CD8-positive, alpha-beta T cell (primary cell): ENCODE measurements at regions of chr3 and their contacts with region 1.

Region 1: GRCh38 chr3:171491361-171491760 is 31.2 kb upstream of the TNIK start:
- DNase-seq: peak in 2 of 9 experiments; percentile 31 to 61
- ATAC-seq: peak; percentile 40
- H3K4me3 ChIP-seq: peak overlapping the region; percentile 25 to 32
- H3K4me3 Mint-ChIP-seq: peak overlapping the region; percentile 50
- H3K27ac ChIP-seq: peak overlapping the region in 1 of 2 experiments; percentile 57
- H3K27ac Mint-ChIP-seq: peak overlapping the region; percentile 66
- H3K4me1 ChIP-seq: peaks cover 39% of the 10 kb centered on the region
- H3K4me1 Mint-ChIP-seq: peaks cover 47% of the 10 kb centered on the region
- H3K27me3 ChIP-seq: no peaks in the 10 kb centered on the region
- H3K27me3 Mint-ChIP-seq: no peaks in the 10 kb centered on the region
- CTCF ChIP-seq: no peak

Region 2: DNA sequence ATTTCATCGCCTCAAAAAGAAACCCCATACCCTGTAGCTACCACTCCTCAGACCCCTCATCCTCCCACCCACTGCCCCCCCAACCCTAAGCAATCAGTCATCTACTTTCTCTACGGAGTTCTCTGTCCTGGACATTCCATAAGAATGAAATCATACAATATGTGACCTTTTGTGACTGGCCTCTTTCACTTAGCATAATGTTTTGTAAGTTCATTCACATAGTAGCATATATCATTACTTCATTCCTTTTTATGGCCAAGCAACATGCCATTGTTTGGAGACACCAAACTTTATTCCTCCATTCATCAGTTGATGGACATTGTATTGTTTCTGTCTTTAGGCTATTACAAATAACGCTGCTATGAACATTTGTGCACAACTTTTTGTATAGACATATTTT is 95.3 kb before region 1 on chr3:
- CTCF ChIA-PET with region 1: no interaction called
- POLR2A ChIA-PET with region 1: no interaction called
- intact Hi-C with region 1: no loop called
- DNase-seq: no peak
- ATAC-seq: no peak
- H3K4me3 ChIP-seq: no peak overlapping the region
- H3K4me3 Mint-ChIP-seq: no peak overlapping the region
- H3K27ac ChIP-seq: no peak overlapping the region
- H3K27ac Mint-ChIP-seq: no peak overlapping the region
- H3K4me1 ChIP-seq: no peaks in the 10 kb centered on the region
- H3K4me1 Mint-ChIP-seq: peaks cover 53% of the 10 kb centered on the region
- H3K27me3 ChIP-seq: no peaks in the 10 kb centered on the region
- H3K27me3 Mint-ChIP-seq: no peaks in the 10 kb centered on the region
- CTCF ChIP-seq: no peak

Region 3: GRCh38 chr3:171436380-171436779 is 55.0 kb before region 1 on chr3:
- CTCF ChIA-PET with region 1: no interaction called
- POLR2A ChIA-PET with region 1: no interaction called
- intact Hi-C with region 1: no loop called
- DNase-seq: no peak
- ATAC-seq: no peak
- H3K4me3 ChIP-seq: no peak overlapping the region
- H3K4me3 Mint-ChIP-seq: no peak overlapping the region
- H3K27ac ChIP-seq: no peak overlapping the region
- H3K27ac Mint-ChIP-seq: no peak overlapping the region
- H3K4me1 ChIP-seq: peaks cover 9% of the 10 kb centered on the region
- H3K4me1 Mint-ChIP-seq: peaks cover 71% of the 10 kb centered on the region
- H3K27me3 ChIP-seq: no peaks in the 10 kb centered on the region
- H3K27me3 Mint-ChIP-seq: no peaks in the 10 kb centered on the region
- CTCF ChIP-seq: no peak

Region 4: DNA sequence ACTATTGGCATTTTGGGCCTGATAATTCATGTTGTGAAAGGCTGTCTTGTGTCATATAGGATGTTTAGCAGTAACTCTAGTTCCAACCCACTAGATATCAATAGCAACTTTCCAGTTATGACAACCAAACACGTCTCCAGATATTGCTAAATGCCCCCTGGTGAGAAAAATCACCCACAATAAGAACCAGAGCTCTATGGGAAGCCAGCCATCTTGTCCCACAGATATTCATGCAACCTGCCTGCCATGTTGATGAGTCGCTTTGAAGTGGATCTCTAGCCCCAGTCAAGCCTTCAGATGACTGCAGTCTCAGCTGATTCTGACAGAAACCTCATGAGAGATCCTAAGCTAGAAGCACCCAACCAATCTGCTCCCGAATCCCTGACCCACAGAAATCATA is 25.6 kb before region 1 on chr3:
- CTCF ChIA-PET with region 1: interaction called, 4 read pairs
- POLR2A ChIA-PET with region 1: interaction called, 7 read pairs
- intact Hi-C with region 1: loop called (anchors 1 to 2 kb)
- DNase-seq: no peak
- ATAC-seq: no peak
- H3K4me3 ChIP-seq: no peak overlapping the region
- H3K4me3 Mint-ChIP-seq: no peak overlapping the region
- H3K27ac ChIP-seq: no peak overlapping the region
- H3K27ac Mint-ChIP-seq: no peak overlapping the region
- H3K4me1 ChIP-seq: peaks cover 12% of the 10 kb centered on the region
- H3K4me1 Mint-ChIP-seq: peaks cover 17% of the 10 kb centered on the region
- H3K27me3 ChIP-seq: no peaks in the 10 kb centered on the region
- H3K27me3 Mint-ChIP-seq: no peaks in the 10 kb centered on the region
- CTCF ChIP-seq: no peak

Region 5: GRCh38 chr3:171480526-171480925 is 10.8 kb before region 1 on chr3:
- CTCF ChIA-PET with region 1: no interaction called
- POLR2A ChIA-PET with region 1: interaction called, 9 read pairs
- intact Hi-C with region 1: loop called in 1 of 2 experiments (anchors 2 kb)
- DNase-seq: peak in 2 of 9 experiments; percentile 42 to 64
- ATAC-seq: peak; percentile 79
- H3K4me3 ChIP-seq: no peak overlapping the region
- H3K4me3 Mint-ChIP-seq: peak overlapping the region; percentile 30
- H3K27ac ChIP-seq: peak overlapping the region in 1 of 2 experiments; percentile 50
- H3K27ac Mint-ChIP-seq: peak overlapping the region; percentile 69
- H3K4me1 ChIP-seq: peaks cover 15% of the 10 kb centered on the region
- H3K4me1 Mint-ChIP-seq: peaks cover 10% of the 10 kb centered on the region
- H3K27me3 ChIP-seq: no peaks in the 10 kb centered on the region
- H3K27me3 Mint-ChIP-seq: no peaks in the 10 kb centered on the region
- CTCF ChIP-seq: no peak